ENCODE measurements at regions of chr19 and their contacts with region 1.

Region 1: GRCh38 chr19:44903602-44904425 is 1.8 kb upstream of the APOE start:
- DNase-seq: peak; percentile 94
- H3K4me3 ChIP-seq: no peak overlapping the region
- H3K27ac ChIP-seq: peak overlapping the region in 2 of 8 donors; percentile 16 to 52
- H3K4me1 ChIP-seq: peaks cover 16 to 40% (median 32%) of the 10 kb centered on the region in 6 donors
- H3K27me3 ChIP-seq: peaks cover 0 to 34% (median 23%) of the 10 kb centered on the region in 7 donors
- CTCF ChIP-seq: peak; percentile 89 to 99 (median 97)
- POLR2A ChIP-seq: no peak

Region 2: DNA sequence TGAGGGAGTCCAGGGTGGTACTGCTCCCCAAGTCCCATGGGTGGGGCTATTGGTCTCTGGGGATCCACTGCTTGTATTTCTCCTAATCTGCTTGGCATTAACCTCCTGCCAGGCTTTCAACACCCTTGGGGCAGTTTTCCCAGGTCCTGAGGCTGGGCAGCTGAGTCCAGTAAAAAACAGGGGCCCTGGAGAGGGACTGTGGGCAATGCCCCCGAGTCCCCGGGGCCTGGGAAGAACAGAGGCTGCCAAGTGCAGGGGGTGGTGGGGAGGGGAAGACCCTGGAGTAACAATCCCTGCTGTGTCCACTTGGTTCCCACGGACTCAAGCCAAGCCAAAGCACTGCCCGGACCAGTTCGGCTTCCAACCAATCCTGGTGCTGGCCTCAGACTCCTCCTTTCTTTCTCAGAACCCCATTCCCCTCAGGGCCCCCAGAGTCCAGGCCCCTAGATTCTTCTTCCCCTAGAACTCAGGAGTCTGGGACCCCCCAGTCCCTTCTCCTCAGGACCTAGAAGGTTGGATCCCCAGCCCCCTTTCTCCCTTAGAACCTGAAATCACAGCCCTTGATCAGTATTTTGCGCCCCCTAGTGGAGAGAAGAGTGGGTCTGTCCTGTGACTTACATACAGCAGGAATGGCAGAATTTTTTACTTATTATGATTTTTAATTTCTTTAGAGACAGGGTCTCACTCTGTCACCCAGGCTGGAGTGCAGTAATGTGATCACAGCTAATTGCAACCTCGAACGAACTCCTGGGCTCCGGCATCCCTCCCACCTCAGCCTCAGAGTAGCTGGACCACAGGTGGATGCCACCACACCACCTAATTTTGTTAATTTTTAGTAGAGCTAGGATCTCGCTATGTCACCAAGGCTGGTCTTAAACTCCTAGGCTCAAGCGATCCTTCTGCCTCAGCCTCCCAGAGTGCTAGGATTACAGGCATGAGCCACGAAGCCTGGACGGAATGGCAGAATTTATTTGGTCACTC is 47.7 kb after region 1 on chr19:
- intact Hi-C with region 1: loop called (anchors 2 kb)
- DNase-seq: no peak
- H3K4me3 ChIP-seq: no peak overlapping the region
- H3K27ac ChIP-seq: peak overlapping the region in 1 of 8 donors; percentile 37
- H3K4me1 ChIP-seq: peaks cover 12 to 41% (median 33%) of the 10 kb centered on the region in 6 donors
- H3K27me3 ChIP-seq: no peaks in the 10 kb centered on the region
- CTCF ChIP-seq: peak; percentile 52 to 88 (median 81)
- POLR2A ChIP-seq: no peak